Gastrocnemius medialis (tissue), 4 donors: ENCODE measurements at regions of chr9 and their contacts with region 1.

Region 1: DNA sequence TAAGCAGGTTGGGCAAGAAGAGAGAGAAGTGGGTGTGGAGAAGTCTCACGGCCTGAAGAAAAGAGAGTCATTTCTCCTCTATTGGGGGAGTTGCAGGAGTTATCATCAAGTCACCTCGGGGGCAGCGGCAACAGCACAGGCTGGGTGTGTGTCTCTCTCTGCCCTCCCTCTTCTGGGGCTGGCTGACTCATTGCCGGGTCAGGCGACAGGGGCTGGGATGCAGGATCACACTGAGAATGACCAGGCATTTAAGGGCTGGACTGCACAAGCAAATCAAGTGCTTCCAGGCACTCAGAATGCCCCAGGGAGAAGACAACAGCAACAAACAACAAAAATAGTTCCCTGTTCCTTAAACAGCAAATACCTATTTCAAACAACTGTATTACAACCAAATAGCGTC is 6.3 kb upstream of the EQTN start:
- DNase-seq: no peak
- ATAC-seq: no peak
- H3K4me3 ChIP-seq: no peak overlapping the region
- H3K27ac ChIP-seq: no peak overlapping the region
- H3K4me1 ChIP-seq: no peaks in the 10 kb centered on the region
- H3K27me3 ChIP-seq: no peaks in the 10 kb centered on the region
- CTCF ChIP-seq: no peak
- POLR2A ChIP-seq: no peak

Region 2: DNA sequence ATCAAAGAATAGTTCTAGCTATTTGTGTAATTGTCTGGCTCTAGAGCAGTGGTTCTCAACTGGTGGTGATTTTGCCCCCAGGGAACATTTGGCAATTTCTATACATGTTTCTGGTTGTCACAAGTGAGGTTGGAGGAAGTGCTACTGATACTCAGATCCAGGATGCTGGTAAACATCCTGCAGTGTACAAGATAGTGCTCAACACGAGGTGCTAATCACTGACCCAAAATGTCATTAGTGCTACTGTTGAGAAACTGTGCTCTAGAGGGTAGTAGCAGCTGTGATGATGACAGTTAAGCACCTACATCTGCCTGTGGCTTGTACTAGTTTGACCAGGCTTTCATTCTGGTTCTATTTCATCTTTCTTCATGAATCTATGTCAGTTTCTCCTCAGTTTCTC is 319.9 kb before region 1 on chr9:
- in situ Hi-C with region 1: no loop called
- intact Hi-C with region 1: no loop called
- DNase-seq: no peak
- ATAC-seq: no peak
- H3K4me3 ChIP-seq: no peak overlapping the region
- H3K27ac ChIP-seq: no peak overlapping the region
- H3K4me1 ChIP-seq: no peaks in the 10 kb centered on the region
- H3K27me3 ChIP-seq: no peaks in the 10 kb centered on the region
- CTCF ChIP-seq: no peak
- POLR2A ChIP-seq: no peak

Region 3: GRCh38 chr9:27272103-27272502 is 31.1 kb before region 1 on chr9:
- in situ Hi-C with region 1: no loop called
- intact Hi-C with region 1: no loop called
- DNase-seq: no peak
- ATAC-seq: no peak
- H3K4me3 ChIP-seq: no peak overlapping the region
- H3K27ac ChIP-seq: no peak overlapping the region
- H3K4me1 ChIP-seq: peaks cover 0 to 3% of the 10 kb centered on the region in 2 donors
- H3K27me3 ChIP-seq: no peaks in the 10 kb centered on the region
- CTCF ChIP-seq: no peak
- POLR2A ChIP-seq: no peak

Region 4: GRCh38 chr9:27282269-27282668 is 20.9 kb before region 1 on chr9:
- in situ Hi-C with region 1: no loop called
- intact Hi-C with region 1: loop called (anchors 1 kb)
- DNase-seq: no peak
- ATAC-seq: no peak
- H3K4me3 ChIP-seq: no peak overlapping the region
- H3K27ac ChIP-seq: no peak overlapping the region
- H3K4me1 ChIP-seq: no peaks in the 10 kb centered on the region
- H3K27me3 ChIP-seq: no peaks in the 10 kb centered on the region
- CTCF ChIP-seq: no peak
- POLR2A ChIP-seq: no peak